SK-N-SH (cell line): ENCODE measurements at regions of chr6 and their contacts with region 1.

Region 1: GRCh38 chr6:149925974-149926777 is 3.3 kb upstream of the RAET1G start:
- DNase-seq: peak; percentile 80
- H3K4me3 ChIP-seq: peak overlapping the region; percentile 32 to 40
- H3K27ac ChIP-seq: no peak overlapping the region
- H3K4me1 ChIP-seq: peaks cover 0 to 9% of the 10 kb centered on the region in 2 experiments; a peak in 1 of 4 replicates
- H3K27me3 ChIP-seq: no peaks in the 10 kb centered on the region; the same call in 1 of the 2 replicates
- CTCF ChIP-seq: peak; percentile 73
- EP300 ChIP-seq: no peak
- RAD21 ChIP-seq: peak; percentile 86

Region 2: DNA sequence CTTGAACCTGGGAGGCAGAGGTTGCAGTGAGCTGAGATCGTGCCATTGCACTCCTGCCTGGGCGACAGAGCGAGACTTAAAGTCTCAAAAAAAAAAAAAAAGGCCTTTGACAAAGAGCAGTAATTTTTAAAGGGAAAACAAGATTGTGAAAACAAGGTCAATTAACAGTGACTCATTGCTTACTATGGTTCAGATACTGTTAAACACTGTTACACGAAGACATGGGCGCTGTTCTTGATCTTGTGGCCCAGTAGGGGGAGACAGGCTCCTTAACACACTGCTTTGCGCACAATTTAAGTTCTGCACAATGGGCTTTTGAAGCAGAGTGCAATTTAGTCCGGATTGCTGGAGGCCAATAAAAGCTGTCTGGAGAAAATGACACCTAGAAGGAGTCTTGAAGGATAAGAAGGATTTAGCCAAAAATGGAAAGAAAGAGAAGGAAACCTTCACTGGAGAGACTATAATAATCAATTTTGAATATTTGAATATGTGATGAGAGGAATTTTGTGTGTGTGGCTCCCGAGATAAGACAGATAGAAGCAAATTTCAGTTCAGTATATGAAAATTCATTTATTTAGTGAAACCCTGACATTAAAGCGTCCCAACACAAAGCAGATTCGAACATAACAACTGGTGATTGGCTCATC is 202.3 kb before region 1 on chr6:
- CTCF ChIA-PET with region 1: no interaction called
- POLR2A ChIA-PET with region 1: no interaction called
- DNase-seq: peak; percentile 53
- H3K4me3 ChIP-seq: peak overlapping the region in 1 of 2 experiments; percentile 51; a peak in 1 of 4 replicates
- H3K27ac ChIP-seq: no peak overlapping the region
- H3K4me1 ChIP-seq: no peaks in the 10 kb centered on the region
- H3K27me3 ChIP-seq: no peaks in the 10 kb centered on the region
- CTCF ChIP-seq: peak; percentile 78
- EP300 ChIP-seq: no peak
- RAD21 ChIP-seq: peak; percentile 70

Region 3: GRCh38 chr6:149834513-149835481 is 91.4 kb before region 1 on chr6:
- CTCF ChIA-PET with region 1: interaction called, 23 read pairs
- POLR2A ChIA-PET with region 1: no interaction called
- DNase-seq: peak; percentile 62
- H3K4me3 ChIP-seq: peak overlapping the region in 1 of 2 experiments; percentile 9; a peak in 1 of 4 replicates
- H3K27ac ChIP-seq: no peak overlapping the region
- H3K4me1 ChIP-seq: peaks cover 0 to 3% of the 10 kb centered on the region in 2 experiments; a peak in 2 of 4 replicates
- H3K27me3 ChIP-seq: no peaks in the 10 kb centered on the region
- CTCF ChIP-seq: peak; percentile 90
- EP300 ChIP-seq: no peak
- RAD21 ChIP-seq: peak; percentile 93

Region 4: GRCh38 chr6:149840345-149841075 is 85.7 kb before region 1 on chr6:
- CTCF ChIA-PET with region 1: interaction called, 23 read pairs
- POLR2A ChIA-PET with region 1: no interaction called
- DNase-seq: peak; percentile 76
- H3K4me3 ChIP-seq: no peak overlapping the region
- H3K27ac ChIP-seq: peak overlapping the region; percentile 56 to 92
- H3K4me1 ChIP-seq: peaks cover 15 to 42% of the 10 kb centered on the region in 2 experiments; a peak in 3 of 4 replicates
- H3K27me3 ChIP-seq: no peaks in the 10 kb centered on the region
- CTCF ChIP-seq: peak; percentile 64
- EP300 ChIP-seq: peak; percentile 28 to 50; a peak in 3 of 4 replicates
- RAD21 ChIP-seq: peak; percentile 56

Region 5: DNA sequence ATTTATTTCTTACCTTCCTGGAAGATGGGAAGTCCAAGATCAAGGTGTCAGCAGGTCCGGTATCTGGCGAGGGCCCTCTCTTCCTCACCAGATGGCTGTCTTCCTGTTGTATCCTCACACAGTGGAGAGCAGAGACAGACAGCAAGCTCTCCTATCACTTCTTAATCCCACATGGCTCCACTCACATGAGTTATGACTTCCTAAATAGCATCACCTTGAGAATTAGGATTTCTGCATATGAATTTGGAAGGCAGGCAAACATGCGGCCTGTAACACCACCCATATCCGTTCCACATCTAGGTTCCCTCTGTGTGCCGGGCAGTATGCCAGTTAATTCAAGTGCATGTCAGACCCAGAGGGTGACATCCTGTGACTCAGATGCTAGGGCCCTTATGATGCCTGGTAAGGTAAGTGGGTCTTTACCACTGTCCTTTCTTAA is 30.3 kb before region 1 on chr6:
- CTCF ChIA-PET with region 1: no interaction called
- POLR2A ChIA-PET with region 1: no interaction called
- DNase-seq: peak; percentile 44
- H3K4me3 ChIP-seq: no peak overlapping the region
- H3K27ac ChIP-seq: peak overlapping the region; percentile 17 to 84; a peak in 3 of 4 replicates
- H3K4me1 ChIP-seq: peaks cover 5 to 21% of the 10 kb centered on the region in 2 experiments; a peak in 3 of 4 replicates
- H3K27me3 ChIP-seq: no peaks in the 10 kb centered on the region
- CTCF ChIP-seq: no peak
- EP300 ChIP-seq: no peak
- RAD21 ChIP-seq: no peak

Region 6: GRCh38 chr6:149950423-149950822 is 24.2 kb after region 1 on chr6:
- CTCF ChIA-PET with region 1: no interaction called
- POLR2A ChIA-PET with region 1: no interaction called
- DNase-seq: no peak
- H3K4me3 ChIP-seq: no peak overlapping the region
- H3K27ac ChIP-seq: no peak overlapping the region
- H3K4me1 ChIP-seq: no peaks in the 10 kb centered on the region
- H3K27me3 ChIP-seq: peaks cover 38% of the 10 kb centered on the region
- CTCF ChIP-seq: no peak
- EP300 ChIP-seq: no peak
- RAD21 ChIP-seq: no peak